IMR-90 (cell line): ENCODE measurements at regions of chr2 and their contacts with region 1.

Region 1: DNA sequence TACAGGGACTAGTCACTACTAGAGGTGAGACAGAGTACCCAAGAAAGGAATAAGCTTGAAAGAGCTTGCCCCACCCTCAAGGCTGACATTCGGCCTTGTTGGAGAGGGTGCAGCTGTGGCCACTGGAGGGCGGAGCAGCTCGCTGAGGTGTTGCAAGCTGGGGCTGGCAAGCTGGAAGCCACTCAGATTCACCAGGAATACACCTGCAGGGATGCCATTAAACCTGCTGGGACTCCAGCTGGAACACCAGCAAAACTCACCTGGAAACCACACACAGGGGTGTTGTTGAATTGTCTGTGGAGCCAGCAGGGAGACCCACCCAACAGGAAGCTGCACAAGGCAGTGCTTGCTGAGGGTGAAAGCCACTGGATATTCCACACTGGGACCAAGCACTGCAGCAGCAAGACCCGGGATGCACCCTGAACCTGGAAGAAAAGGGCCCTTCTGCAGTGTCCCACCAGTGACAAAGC is 26.1 kb downstream of the KCTD18 start:
- DNase-seq: peak; percentile 25
- ATAC-seq: no peak
- H3K4me3 ChIP-seq: no peak overlapping the region
- H3K27ac ChIP-seq: no peak overlapping the region
- H3K4me1 ChIP-seq: peaks cover 19% of the 10 kb centered on the region
- H3K27me3 ChIP-seq: no peaks in the 10 kb centered on the region
- CTCF ChIP-seq: peak; percentile 25; the same call in 1 of the 2 replicates
- POLR2A ChIP-seq: no peak
- RAD21 ChIP-seq: no peak

Region 2: GRCh38 chr2:199973703-199974102 is 510.1 kb before region 1 on chr2:
- CTCF ChIA-PET with region 1: interaction called, 5 read pairs
- POLR2A ChIA-PET with region 1: no interaction called
- dilution Hi-C with region 1: no loop called
- in situ Hi-C with region 1: loop called (anchors 5 kb)
- intact Hi-C with region 1: loop called (anchors 1 kb)
- DNase-seq: peak; percentile 71
- ATAC-seq: peak; percentile 76
- H3K4me3 ChIP-seq: no peak overlapping the region
- H3K27ac ChIP-seq: no peak overlapping the region
- H3K4me1 ChIP-seq: peaks cover 4% of the 10 kb centered on the region; the same call in 1 of the 2 replicates
- H3K27me3 ChIP-seq: no peaks in the 10 kb centered on the region
- CTCF ChIP-seq: peak; percentile 72
- POLR2A ChIP-seq: 0 out of 2 replicates have a peak, but pooled peaks have one; percentile 36
- RAD21 ChIP-seq: peak; percentile 91

Region 3: GRCh38 chr2:200252265-200253067 is 231.3 kb before region 1 on chr2:
- CTCF ChIA-PET with region 1: no interaction called
- POLR2A ChIA-PET with region 1: no interaction called
- dilution Hi-C with region 1: no loop called
- in situ Hi-C with region 1: no loop called
- intact Hi-C with region 1: loop called (anchors 5 kb)
- DNase-seq: peak; percentile 93
- ATAC-seq: peak; percentile 81
- H3K4me3 ChIP-seq: no peak overlapping the region
- H3K27ac ChIP-seq: peak overlapping the region; percentile 87
- H3K4me1 ChIP-seq: peaks cover 20% of the 10 kb centered on the region
- H3K27me3 ChIP-seq: no peaks in the 10 kb centered on the region
- CTCF ChIP-seq: no peak
- POLR2A ChIP-seq: no peak
- RAD21 ChIP-seq: no peak; the same call in 1 of the 2 replicates

Region 4: GRCh38 chr2:200461846-200462710 is 21.7 kb before region 1 on chr2:
- CTCF ChIA-PET with region 1: no interaction called
- POLR2A ChIA-PET with region 1: no interaction called
- dilution Hi-C with region 1: no loop called
- in situ Hi-C with region 1: no loop called
- intact Hi-C with region 1: no loop called
- DNase-seq: no peak
- ATAC-seq: no peak; the same call in 1 of the 2 replicates
- H3K4me3 ChIP-seq: no peak overlapping the region
- H3K27ac ChIP-seq: 0 out of 2 replicates have a peak overlapping the region, but pooled peaks have one; percentile 15
- H3K4me1 ChIP-seq: peaks cover 2% of the 10 kb centered on the region; the same call in 1 of the 2 replicates
- H3K27me3 ChIP-seq: no peaks in the 10 kb centered on the region
- CTCF ChIP-seq: no peak
- POLR2A ChIP-seq: no peak
- RAD21 ChIP-seq: no peak

Region 5: DNA sequence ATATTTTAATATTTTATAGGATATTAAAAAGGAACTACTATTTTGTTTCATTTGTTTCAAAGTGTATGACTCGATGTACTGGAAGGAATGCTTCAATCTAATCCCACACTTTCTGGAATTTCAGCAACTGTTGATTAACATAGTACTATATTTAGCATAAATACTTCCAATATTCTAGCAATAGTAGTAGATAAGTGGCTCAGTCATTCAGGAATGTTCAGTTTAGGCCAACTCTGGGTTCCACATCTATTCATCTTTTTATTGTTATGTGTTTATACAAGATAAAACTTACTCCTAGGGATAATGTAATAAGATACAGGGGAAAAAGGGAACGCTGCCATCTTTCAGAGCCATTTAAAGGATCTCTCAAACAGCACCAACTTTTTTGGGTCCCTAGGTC is 502.0 kb after region 1 on chr2:
- CTCF ChIA-PET with region 1: no interaction called
- POLR2A ChIA-PET with region 1: no interaction called
- dilution Hi-C with region 1: no loop called
- in situ Hi-C with region 1: no loop called
- intact Hi-C with region 1: no loop called
- DNase-seq: peak; percentile 84
- ATAC-seq: peak; percentile 80
- H3K4me3 ChIP-seq: no peak overlapping the region
- H3K27ac ChIP-seq: no peak overlapping the region
- H3K4me1 ChIP-seq: peaks cover 12% of the 10 kb centered on the region
- H3K27me3 ChIP-seq: no peaks in the 10 kb centered on the region
- CTCF ChIP-seq: no peak
- POLR2A ChIP-seq: no peak
- RAD21 ChIP-seq: no peak